Natural killer cell (primary cell): ENCODE measurements at regions of chr1 and their contacts with region 1.

Region 1: GRCh38 chr1:192477630-192478029 is 97.9 kb upstream of the RGS1 start:
- DNase-seq: peak in 1 of 2 donors; percentile 69
- ATAC-seq: peak in 2 of 3 donors; percentile 70 to 74
- H3K4me3 ChIP-seq: no peak overlapping the region
- H3K4me3 Mint-ChIP-seq: no peak overlapping the region
- H3K27ac ChIP-seq: no peak overlapping the region
- H3K27ac Mint-ChIP-seq: no peak overlapping the region
- H3K4me1 ChIP-seq: no peaks in the 10 kb centered on the region
- H3K4me1 Mint-ChIP-seq: no peaks in the 10 kb centered on the region
- H3K27me3 ChIP-seq: peaks cover 3% of the 10 kb centered on the region
- H3K27me3 Mint-ChIP-seq: no peaks in the 10 kb centered on the region
- CTCF ChIP-seq: peak; percentile 61

Region 2: DNA sequence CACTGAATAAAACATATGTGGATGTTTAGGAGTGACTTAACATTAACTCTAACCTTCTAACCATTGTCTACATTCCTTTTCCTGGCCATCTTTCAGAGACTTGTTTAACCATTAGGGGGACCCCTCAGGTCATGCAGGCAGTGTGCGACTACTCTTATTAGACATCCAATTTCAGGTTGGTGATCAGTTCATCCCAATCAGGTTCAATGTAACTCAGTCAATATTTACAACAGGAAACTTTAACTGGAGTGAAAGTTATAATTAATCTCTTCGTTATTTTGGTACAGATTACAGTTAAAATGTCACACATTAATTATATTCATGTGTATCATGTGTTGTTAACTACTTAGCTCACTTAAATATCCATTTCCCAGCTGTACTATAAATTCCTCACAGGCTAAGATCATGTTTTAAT is 29.1 kb after region 1 on chr1:
- intact Hi-C with region 1: no loop called
- DNase-seq: peak in 1 of 2 donors; percentile 54
- ATAC-seq: peak in 1 of 3 donors; percentile 58
- H3K4me3 ChIP-seq: no peak overlapping the region
- H3K4me3 Mint-ChIP-seq: no peak overlapping the region
- H3K27ac ChIP-seq: no peak overlapping the region
- H3K27ac Mint-ChIP-seq: no peak overlapping the region
- H3K4me1 ChIP-seq: no peaks in the 10 kb centered on the region
- H3K4me1 Mint-ChIP-seq: no peaks in the 10 kb centered on the region
- H3K27me3 ChIP-seq: no peaks in the 10 kb centered on the region
- H3K27me3 Mint-ChIP-seq: peaks cover 0 to 3% of the 10 kb centered on the region in 2 donors
- CTCF ChIP-seq: peak; percentile 16

Region 3: DNA sequence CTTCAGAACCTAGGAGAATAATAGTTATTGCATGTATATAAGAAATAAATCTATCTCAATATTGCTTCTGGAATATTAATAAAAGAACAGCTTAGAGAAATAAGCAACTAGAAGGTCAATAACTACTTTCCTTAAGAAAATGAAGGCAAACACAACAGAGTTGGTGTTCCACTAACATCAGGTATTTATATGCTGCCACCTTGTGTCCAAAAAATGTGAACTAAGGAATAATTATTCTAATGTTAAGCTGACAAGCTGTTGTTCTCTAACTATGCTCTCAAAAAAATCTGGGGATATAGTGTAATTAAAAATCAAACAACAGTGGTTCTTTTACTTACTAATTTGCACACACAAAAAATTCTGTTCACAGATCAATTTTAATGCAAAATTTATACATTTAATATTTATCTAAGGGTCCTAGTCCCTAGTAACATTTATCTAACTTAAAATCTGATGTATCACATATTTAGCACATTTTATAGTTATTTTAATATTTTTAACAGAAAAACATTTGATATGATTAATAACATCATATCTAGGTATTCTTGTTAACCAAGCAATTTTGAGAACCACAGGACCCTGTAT is 541.9 kb after region 1 on chr1:
- intact Hi-C with region 1: loop called (anchors 1 kb)
- DNase-seq: peak in 1 of 2 donors; percentile 66
- ATAC-seq: peak in 2 of 3 donors; percentile 60 to 68
- H3K4me3 ChIP-seq: no peak overlapping the region
- H3K4me3 Mint-ChIP-seq: no peak overlapping the region
- H3K27ac ChIP-seq: no peak overlapping the region
- H3K27ac Mint-ChIP-seq: no peak overlapping the region
- H3K4me1 ChIP-seq: no peaks in the 10 kb centered on the region
- H3K4me1 Mint-ChIP-seq: no peaks in the 10 kb centered on the region
- H3K27me3 ChIP-seq: no peaks in the 10 kb centered on the region
- H3K27me3 Mint-ChIP-seq: no peaks in the 10 kb centered on the region
- CTCF ChIP-seq: peak; percentile 69